Heart left ventricle (tissue), 16 donors: ENCODE measurements at regions of chr11 and their contacts with region 1.

Region 1: GRCh38 chr11:73295231-73295995 is 12.7 kb upstream of the ARHGEF17 start:
- DNase-seq: peak; percentile 60 to 81 (median 68)
- ATAC-seq: peak in 3 of 4 donors; percentile 26 to 54 (median 39)
- H3K4me3 ChIP-seq: no peak overlapping the region
- H3K27ac ChIP-seq: no peak overlapping the region
- H3K4me1 ChIP-seq: peaks cover 0 to 23% (median 3%) of the 10 kb centered on the region in 12 donors
- H3K27me3 ChIP-seq: no peaks in the 10 kb centered on the region
- CTCF ChIP-seq: peak; percentile 72 to 90 (median 86)
- POLR2A ChIP-seq: no peak

Region 2: DNA sequence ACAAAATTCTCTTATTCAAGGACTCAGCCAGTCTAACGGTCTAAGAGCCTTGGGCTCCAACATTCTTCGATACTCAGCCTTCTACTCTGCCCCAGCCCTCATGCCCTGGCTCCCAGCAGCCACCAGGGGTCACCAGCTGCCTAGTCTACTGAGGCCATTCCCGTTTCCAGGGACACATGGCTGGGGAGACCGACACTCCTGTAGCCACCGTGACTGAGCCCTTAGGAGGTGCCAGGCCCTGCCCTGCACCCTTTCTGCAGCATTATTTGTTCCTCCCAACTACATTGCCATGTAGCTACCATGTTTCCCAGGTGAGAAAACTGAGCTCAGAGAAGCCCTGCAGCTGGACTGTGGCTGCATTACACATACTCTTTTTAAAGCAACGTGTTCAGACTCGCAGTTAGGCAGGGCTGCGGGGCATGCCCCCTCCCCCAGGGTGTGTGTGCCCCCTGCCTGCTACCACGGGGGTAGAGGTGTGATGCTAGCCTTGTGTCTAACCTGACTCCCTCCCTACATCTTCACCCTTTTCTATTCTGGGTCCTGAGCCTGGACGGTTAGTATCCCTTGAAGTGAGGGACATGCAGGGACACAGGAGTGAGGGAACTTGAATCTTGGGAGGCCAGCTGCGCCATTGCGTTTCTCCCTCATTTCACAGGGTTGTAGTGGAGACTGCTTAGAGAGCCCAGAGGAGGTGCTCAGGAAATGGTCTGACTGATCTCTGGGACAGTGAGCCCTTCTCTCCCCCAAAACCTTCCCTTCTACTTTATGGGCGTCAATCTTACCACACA is 463.7 kb before region 1 on chr11:
- intact Hi-C with region 1: loop called in 1 of 10 experiments (anchors 5 kb)
- DNase-seq: peak; percentile 85 to 91 (median 88)
- ATAC-seq: peak; percentile 73 to 81 (median 76)
- H3K4me3 ChIP-seq: no peak overlapping the region
- H3K27ac ChIP-seq: peak overlapping the region; percentile 80 to 98 (median 90)
- H3K4me1 ChIP-seq: peaks cover 39 to 85% (median 61%) of the 10 kb centered on the region in 12 donors
- H3K27me3 ChIP-seq: no peaks in the 10 kb centered on the region
- CTCF ChIP-seq: peak; percentile 91 to 99 (median 97)
- POLR2A ChIP-seq: no peak

Region 3: DNA sequence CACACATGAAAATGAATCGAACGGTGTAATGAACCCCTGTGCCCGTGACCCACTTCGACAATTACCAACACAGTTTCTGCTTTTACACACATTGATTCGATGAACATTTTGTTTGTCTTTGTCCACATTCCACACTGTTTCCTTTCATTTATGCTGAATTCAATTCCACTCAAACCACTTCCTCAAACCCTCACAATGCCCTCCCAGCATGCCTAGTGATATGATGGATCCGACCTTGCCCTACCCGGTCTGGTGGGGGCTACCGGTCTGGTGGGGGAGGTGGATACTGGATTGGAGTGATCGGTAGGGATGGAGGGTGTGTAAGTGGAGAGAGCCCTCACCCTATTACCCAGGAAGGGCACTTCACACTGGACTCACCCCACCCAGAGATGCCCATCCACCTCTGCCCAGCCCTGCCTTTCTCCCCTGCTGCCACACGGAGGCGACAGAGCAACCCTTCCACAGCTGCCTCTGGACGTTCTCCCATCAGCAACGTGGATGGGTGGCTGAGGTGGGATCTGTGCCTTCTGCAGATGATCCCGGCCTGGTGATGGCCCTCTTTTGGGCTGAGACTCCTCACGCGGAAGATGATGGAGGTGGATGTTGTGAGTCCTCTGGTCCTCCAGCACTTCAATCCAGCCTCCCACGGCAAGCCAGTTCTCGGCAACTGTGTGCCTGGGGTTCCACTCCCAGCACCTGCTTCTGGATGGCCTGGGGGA is 110.3 kb before region 1 on chr11:
- intact Hi-C with region 1: loop called in 1 of 10 experiments (anchors 5 kb)
- DNase-seq: peak; percentile 59 to 88 (median 78)
- ATAC-seq: peak; percentile 16 to 63 (median 54)
- H3K4me3 ChIP-seq: peak overlapping the region in 1 of 12 donors; percentile 28
- H3K27ac ChIP-seq: peak overlapping the region in 4 of 12 donors; percentile 8 to 67 (median 30)
- H3K4me1 ChIP-seq: peaks cover 3 to 57% (median 24%) of the 10 kb centered on the region in 12 donors
- H3K27me3 ChIP-seq: no peaks in the 10 kb centered on the region
- CTCF ChIP-seq: peak; percentile 75 to 88 (median 84)
- POLR2A ChIP-seq: no peak

Region 4: DNA sequence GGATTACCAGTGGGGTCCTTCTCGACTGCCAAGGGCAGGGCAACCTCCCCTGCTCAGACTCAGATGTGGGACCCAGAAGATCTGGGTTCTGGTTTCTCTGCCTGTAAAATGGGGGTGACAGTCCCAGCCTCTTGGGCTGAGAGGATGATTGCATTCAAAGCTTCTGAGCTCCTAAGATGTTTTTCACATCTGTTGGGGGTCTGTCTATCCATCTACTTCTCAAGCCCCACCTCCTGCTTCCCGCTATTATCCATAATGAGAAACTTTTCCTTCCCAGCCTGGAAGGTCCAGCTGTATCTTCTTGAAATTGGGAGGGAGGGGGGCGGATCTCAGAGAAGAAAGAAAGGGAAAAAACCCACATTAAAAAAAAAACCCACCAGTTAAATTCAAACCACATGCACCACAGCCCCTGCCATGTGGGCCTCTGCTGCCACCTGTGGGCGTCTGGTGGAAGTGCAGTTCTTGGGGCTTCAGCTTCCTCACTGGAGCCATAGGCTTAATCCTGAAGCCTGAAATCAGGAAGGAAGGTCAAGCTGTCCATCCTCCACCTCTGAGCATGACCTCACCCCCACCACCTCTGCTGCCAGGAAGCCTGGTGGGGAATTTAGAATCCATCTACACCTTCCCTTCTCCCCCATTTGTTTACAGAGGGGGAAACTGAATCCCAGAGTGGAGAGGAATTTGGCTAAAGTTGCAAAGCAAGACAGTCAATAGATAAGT is 40.0 kb after region 1 on chr11:
- intact Hi-C with region 1: loop called in 1 of 10 experiments (anchors 5 kb)
- DNase-seq: peak; percentile 75 to 90 (median 83)
- ATAC-seq: peak; percentile 47 to 79 (median 64)
- H3K4me3 ChIP-seq: peak overlapping the region in 4 of 12 donors; percentile 5 to 28 (median 14)
- H3K27ac ChIP-seq: peak overlapping the region; percentile 27 to 87 (median 78)
- H3K4me1 ChIP-seq: peaks cover 13 to 78% (median 56%) of the 10 kb centered on the region in 12 donors
- H3K27me3 ChIP-seq: no peaks in the 10 kb centered on the region
- CTCF ChIP-seq: peak; percentile 93 to 100 (median 99)
- POLR2A ChIP-seq: no peak

Region 5: DNA sequence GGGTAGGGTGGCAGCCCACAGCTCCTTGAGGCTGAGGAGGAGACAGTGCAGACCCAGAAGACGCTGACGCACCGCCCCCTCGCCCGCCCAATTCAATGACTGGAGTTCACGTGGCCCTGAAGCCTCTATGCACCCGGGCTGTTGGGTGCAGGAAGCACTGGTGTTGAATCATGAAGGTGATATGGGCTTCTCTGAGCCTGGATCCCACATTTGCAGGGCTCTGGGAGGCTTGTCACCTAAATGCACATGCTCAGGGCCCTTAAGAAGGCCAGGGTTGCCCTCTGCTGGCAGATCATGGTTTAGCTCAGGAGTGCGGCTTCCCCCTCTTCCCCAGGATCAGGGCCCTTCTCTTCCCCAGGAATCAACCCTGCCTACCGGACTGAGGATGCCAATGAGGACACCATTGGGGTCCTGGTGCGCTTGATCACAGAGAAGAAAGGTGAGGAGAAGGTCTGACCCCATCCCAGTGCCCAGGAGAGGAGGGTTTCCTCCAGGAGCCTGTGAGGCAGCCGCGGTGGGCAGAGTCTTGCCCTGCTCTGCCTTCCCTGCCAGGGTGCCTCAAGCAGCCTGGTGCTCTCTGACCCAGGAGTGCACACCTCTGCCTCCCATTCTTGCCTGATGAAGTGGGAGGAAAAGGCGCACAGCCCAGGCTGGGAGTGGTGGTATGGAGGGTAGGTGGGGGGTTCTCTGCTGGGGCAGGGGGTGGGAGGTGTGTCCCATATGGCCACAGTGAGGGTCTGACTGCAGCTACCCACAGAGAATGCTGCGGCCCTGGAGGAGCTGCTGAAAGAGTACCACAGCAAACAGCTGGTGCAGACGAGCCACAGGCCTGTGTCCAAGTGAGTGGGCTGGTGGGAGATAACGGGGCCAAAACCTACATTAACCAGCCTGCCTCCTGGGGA is 98.3 kb after region 1 on chr11:
- intact Hi-C with region 1: loop called in 3 of 10 experiments (anchors 2 to 5 kb)
- DNase-seq: peak; percentile 71 to 87 (median 79)
- ATAC-seq: peak; percentile 58 to 79 (median 70)
- H3K4me3 ChIP-seq: no peak overlapping the region
- H3K27ac ChIP-seq: peak overlapping the region in 1 of 12 donors; percentile 13
- H3K4me1 ChIP-seq: peaks cover 0 to 37% (median 13%) of the 10 kb centered on the region in 12 donors
- H3K27me3 ChIP-seq: no peaks in the 10 kb centered on the region
- CTCF ChIP-seq: peak; percentile 58 to 83 (median 78)
- POLR2A ChIP-seq: no peak